Transverse colon (tissue), 4 donors: ENCODE measurements at regions of chr5 and their contacts with region 1.

Region 1: DNA sequence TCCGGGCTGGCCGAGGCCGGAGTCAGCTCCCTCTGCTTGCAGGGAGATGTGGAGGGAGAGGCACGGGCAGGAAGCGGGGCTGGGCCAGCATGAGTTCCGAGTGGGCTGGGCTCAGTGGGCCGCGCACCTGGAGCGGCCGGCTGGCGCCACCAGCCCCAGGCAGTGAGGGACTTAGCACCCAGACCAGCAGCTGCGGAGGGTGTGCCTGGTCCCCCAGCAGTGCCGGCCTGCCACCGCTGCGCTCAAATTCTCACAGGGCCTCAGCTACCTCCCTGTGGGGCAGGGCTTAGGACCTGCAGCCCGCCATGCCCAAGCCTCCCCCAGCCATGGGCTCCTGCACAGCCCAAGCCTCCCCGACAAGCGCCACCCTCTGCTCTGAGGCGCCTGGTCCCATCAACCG is 700.3 kb downstream of the DNAH5 start:
- DNase-seq: no peak
- H3K4me3 ChIP-seq: no peak overlapping the region
- H3K27ac ChIP-seq: no peak overlapping the region
- H3K4me1 ChIP-seq: no peaks in the 10 kb centered on the region
- H3K27me3 ChIP-seq: no peaks in the 10 kb centered on the region
- CTCF ChIP-seq: no peak
- EP300 ChIP-seq: no peak
- POLR2A ChIP-seq: no peak

Region 2: GRCh38 chr5:11390291-11391098 is 1853.7 kb before region 1 on chr5:
- in situ Hi-C with region 1: no loop called
- intact Hi-C with region 1: loop called (anchors 5 kb)
- DNase-seq: no peak
- H3K4me3 ChIP-seq: no peak overlapping the region
- H3K27ac ChIP-seq: no peak overlapping the region
- H3K4me1 ChIP-seq: no peaks in the 10 kb centered on the region
- H3K27me3 ChIP-seq: peaks cover 23% of the 10 kb centered on the region
- CTCF ChIP-seq: no peak
- EP300 ChIP-seq: no peak
- POLR2A ChIP-seq: no peak

Region 3: GRCh38 chr5:13488254-13488931 is 244.2 kb after region 1 on chr5:
- in situ Hi-C with region 1: no loop called
- intact Hi-C with region 1: no loop called
- DNase-seq: no peak
- H3K4me3 ChIP-seq: no peak overlapping the region
- H3K27ac ChIP-seq: no peak overlapping the region
- H3K4me1 ChIP-seq: no peaks in the 10 kb centered on the region
- H3K27me3 ChIP-seq: no peaks in the 10 kb centered on the region
- CTCF ChIP-seq: no peak
- EP300 ChIP-seq: no peak
- POLR2A ChIP-seq: no peak